PC-3 (cell line): ENCODE measurements at regions of chr12 and their contacts with region 1.

Region 1: GRCh38 chr12:64550755-64551154 is 59.5 kb upstream of the RASSF3 start:
- DNase-seq: no peak
- ATAC-seq: no peak
- H3K4me3 ChIP-seq: no peak overlapping the region
- H3K27ac ChIP-seq: no peak overlapping the region
- H3K4me1 ChIP-seq: no peaks in the 10 kb centered on the region
- H3K27me3 ChIP-seq: no peaks in the 10 kb centered on the region
- CTCF ChIP-seq: no peak

Region 2: GRCh38 chr12:64600189-64600588 is 49.4 kb after region 1 on chr12:
- CTCF ChIA-PET with region 1: no interaction called
- POLR2A ChIA-PET with region 1: no interaction called
- intact Hi-C with region 1: loop called (anchors 2 kb)
- DNase-seq: peak; percentile 17
- ATAC-seq: peak; percentile 91
- H3K4me3 ChIP-seq: no peak overlapping the region
- H3K27ac ChIP-seq: no peak overlapping the region
- H3K4me1 ChIP-seq: peaks cover 5% of the 10 kb centered on the region; the same call in 1 of the 2 replicates
- H3K27me3 ChIP-seq: no peaks in the 10 kb centered on the region
- CTCF ChIP-seq: no peak

Region 3: GRCh38 chr12:64608901-64609535 is 58.3 kb after region 1 on chr12:
- CTCF ChIA-PET with region 1: interaction called, 3 read pairs
- POLR2A ChIA-PET with region 1: no interaction called
- intact Hi-C with region 1: loop called (anchors 1 kb)
- DNase-seq: peak; percentile 86
- ATAC-seq: peak; percentile 54
- H3K4me3 ChIP-seq: peak overlapping the region; percentile 69
- H3K27ac ChIP-seq: peak overlapping the region; percentile 78
- H3K4me1 ChIP-seq: peaks cover 10% of the 10 kb centered on the region; the same call in 1 of the 2 replicates
- H3K27me3 ChIP-seq: no peaks in the 10 kb centered on the region
- CTCF ChIP-seq: no peak